ENCODE measurements at regions of chr17 and their contacts with region 1.

Region 1: DNA sequence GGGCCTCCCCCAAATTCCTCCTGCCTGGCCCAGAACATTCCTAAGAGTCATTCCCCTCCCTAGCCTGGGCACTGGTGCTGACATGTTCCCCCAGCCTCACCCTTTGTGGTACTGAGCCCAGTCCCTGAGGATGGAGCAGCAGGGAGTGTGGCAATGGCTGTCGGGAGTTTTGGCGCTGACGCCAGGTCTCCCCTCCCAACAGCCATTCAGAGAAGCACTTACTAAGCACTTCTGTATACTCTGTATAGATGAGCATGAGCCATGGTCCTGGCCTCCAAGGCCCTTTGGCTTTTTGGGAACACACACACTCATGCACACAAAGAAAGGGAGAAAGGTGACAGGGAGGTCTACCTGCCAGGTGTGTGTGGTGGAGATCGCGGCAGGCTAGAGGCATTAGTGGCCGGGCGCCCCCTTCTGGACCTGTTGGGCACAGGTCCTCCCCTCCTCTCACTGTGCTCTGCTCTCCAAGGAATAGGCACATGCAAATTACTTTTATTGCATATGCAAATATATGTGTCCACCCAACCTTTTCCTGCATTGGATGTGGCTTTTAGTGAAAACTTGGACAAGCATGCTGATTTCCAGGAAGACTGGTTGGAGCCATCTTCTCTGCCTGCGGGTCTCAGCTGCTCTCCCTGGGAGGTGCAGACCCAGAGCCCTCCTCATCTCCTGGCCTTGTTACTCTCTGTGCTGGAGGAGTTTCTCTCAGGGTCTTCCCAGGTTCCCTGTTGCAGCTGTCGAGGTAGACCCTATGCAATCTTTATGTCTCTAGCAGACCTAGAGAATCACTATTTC is 17.4 kb upstream of the C17orf107 start:
- DNase-seq: peak; percentile 73
- ATAC-seq: peak; percentile 83

Region 2: GRCh38 chr17:4739122-4740024 is 142.6 kb before region 1 on chr17 and contains the starts of genes CXCL16 and ZMYND15:
- intact Hi-C with region 1: loop called (anchors 10 kb)
- DNase-seq: peak; percentile 78
- ATAC-seq: peak; percentile 78
- total RNA-seq, gene CXCL16: 2.7 TPM
- total RNA-seq, gene ZMYND15: not detected

Region 3: GRCh38 chr17:4833178-4833940 is 48.6 kb before region 1 on chr17 and contains the start of gene MINK1:
- intact Hi-C with region 1: loop called (anchors 10 kb)
- DNase-seq: peak; percentile 93
- ATAC-seq: peak; percentile 97
- total RNA-seq, gene MINK1: 47.6 TPM

Region 4: GRCh38 chr17:4858882-4859260 is 23.1 kb before region 1 on chr17:
- intact Hi-C with region 1: loop called (anchors 2 kb)
- DNase-seq: peak; percentile 74
- ATAC-seq: peak; percentile 85

Measured in Right ventricle myocardium superior (tissue), 1 donor.